ENCODE measurements at regions of chr15 and their contacts with region 1.

Region 1: DNA sequence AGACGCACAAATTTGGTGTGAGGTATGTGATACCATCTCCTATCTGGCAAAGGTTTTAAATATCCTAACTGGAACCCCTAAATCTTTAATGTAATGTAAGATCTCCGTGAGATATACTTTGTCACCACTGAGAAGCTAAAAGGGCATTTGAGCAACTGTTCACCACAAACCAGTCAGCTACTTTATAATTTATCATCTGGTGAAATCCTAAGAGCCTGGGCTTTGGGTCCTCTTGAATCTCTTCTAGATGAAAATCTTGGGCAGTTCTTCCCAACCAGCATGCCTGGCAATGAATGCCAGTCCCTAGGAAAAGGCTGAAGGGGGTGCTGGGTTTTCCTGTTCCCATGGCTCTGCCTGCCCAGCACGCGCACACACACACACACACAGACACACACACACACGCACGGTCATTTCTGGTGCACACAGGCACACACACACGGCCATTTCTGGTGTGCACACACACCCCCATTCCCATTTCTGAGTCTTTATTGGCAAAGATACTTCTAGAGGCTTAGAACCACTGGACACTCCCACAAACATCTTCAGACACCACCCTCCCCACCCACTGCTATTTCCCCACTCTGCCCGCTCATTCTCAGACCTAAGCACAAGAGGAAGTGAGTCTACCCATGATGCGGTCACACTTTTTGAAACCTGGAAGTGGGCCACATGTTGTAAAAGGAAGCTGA is 72.6 kb downstream of the MYO1E start:
- DNase-seq: peak; percentile 91
- H3K4me3 Mint-ChIP-seq: peak overlapping the region; percentile 80
- H3K27ac Mint-ChIP-seq: peak overlapping the region; percentile 86
- H3K4me1 Mint-ChIP-seq: peaks cover 55% of the 10 kb centered on the region
- H3K27me3 Mint-ChIP-seq: no peaks in the 10 kb centered on the region

Region 2: GRCh38 chr15:59247364-59247763 is 52.7 kb before region 1 on chr15:
- intact Hi-C with region 1: loop called (anchors 2 kb)
- DNase-seq: peak; percentile 85
- H3K4me3 Mint-ChIP-seq: no peak overlapping the region
- H3K27ac Mint-ChIP-seq: no peak overlapping the region
- H3K4me1 Mint-ChIP-seq: peaks cover 27% of the 10 kb centered on the region
- H3K27me3 Mint-ChIP-seq: no peaks in the 10 kb centered on the region

Region 3: DNA sequence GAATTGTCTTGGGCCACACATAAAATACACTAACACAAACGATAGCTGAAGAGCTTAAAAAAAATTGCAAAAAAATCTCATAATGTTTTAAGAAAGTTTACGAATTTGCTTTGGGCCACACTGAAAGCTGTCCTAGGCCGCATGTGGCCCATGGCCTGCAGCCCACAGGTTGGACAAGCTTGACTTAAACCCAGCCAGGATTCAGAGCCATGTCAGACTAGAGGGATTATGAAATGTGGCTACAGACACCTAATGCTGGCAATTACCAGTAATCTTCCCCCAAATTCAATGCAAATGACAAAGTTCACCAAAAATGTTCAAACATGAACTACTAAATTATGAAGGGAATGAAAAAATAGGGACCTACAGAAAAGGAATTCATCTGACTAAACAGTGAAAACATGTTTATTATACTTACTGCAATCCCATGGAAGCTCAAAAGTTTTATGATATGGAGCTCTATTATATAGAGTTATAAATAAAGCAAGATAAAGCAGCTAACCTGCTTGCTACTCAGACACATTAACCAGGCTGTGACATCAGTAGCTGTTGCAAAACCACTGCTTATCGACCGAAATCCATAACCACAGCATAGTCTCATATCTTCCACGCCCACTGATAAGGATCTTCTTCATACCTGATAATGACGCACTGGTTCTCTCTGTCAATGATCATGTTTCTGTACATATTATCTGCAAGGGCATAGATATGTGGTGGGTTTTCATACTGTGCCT is 44.3 kb before region 1 on chr15:
- intact Hi-C with region 1: loop called (anchors 1 kb)
- DNase-seq: peak; percentile 84
- H3K4me3 Mint-ChIP-seq: peak overlapping the region; percentile 31
- H3K27ac Mint-ChIP-seq: peak overlapping the region; percentile 76
- H3K4me1 Mint-ChIP-seq: peaks cover 50% of the 10 kb centered on the region
- H3K27me3 Mint-ChIP-seq: no peaks in the 10 kb centered on the region

Region 4: DNA sequence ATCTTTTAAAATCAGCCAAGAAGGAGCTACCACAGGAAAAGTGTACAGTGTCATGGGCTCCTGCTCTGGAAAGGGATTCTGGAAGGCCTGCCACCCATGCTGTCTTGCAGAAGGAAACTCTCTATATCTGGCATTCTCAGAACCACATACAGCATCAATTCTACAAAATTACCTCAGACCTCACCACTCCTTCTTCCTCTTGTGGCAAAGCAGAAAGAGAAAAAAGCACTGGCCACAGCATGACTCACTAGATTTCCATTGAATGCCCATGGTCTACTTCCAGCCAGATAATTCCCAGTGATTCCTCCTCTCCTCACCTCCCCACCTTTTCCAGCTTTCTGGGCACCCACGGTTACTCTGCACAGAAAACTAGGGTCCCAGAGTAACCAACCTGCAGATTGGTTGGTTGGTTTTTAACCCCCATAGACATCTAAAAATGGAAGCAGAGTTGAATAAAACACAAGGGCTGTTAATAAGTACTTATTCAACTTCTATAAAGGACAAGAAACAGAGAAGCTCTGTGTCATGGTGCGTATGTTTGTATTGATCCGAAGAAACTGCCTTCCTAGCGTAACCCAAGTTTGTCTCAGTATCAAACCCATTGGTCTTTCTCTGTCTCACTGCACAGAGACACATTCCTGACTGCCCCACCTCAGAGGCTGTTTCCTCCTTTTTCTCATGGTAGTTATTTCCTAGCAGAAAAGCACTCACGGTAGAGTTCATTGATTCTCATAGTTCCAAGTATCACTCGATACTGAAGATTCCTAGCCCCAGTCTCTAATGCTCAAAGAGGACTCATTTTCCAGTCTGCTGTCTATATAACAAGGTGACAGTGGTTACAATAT is 25.7 kb before region 1 on chr15:
- intact Hi-C with region 1: loop called (anchors 1 kb)
- DNase-seq: peak; percentile 75
- H3K4me3 Mint-ChIP-seq: peak overlapping the region; percentile 71
- H3K27ac Mint-ChIP-seq: peak overlapping the region; percentile 80
- H3K4me1 Mint-ChIP-seq: peaks cover 62% of the 10 kb centered on the region
- H3K27me3 Mint-ChIP-seq: peaks cover 8% of the 10 kb centered on the region

Region 5: GRCh38 chr15:59349680-59350420 is 49.8 kb after region 1 on chr15:
- intact Hi-C with region 1: loop called (anchors 2 kb)
- DNase-seq: peak; percentile 66
- H3K4me3 Mint-ChIP-seq: peak overlapping the region; percentile 57
- H3K27ac Mint-ChIP-seq: peak overlapping the region; percentile 75
- H3K4me1 Mint-ChIP-seq: peaks cover 51% of the 10 kb centered on the region
- H3K27me3 Mint-ChIP-seq: no peaks in the 10 kb centered on the region

Region 6: DNA sequence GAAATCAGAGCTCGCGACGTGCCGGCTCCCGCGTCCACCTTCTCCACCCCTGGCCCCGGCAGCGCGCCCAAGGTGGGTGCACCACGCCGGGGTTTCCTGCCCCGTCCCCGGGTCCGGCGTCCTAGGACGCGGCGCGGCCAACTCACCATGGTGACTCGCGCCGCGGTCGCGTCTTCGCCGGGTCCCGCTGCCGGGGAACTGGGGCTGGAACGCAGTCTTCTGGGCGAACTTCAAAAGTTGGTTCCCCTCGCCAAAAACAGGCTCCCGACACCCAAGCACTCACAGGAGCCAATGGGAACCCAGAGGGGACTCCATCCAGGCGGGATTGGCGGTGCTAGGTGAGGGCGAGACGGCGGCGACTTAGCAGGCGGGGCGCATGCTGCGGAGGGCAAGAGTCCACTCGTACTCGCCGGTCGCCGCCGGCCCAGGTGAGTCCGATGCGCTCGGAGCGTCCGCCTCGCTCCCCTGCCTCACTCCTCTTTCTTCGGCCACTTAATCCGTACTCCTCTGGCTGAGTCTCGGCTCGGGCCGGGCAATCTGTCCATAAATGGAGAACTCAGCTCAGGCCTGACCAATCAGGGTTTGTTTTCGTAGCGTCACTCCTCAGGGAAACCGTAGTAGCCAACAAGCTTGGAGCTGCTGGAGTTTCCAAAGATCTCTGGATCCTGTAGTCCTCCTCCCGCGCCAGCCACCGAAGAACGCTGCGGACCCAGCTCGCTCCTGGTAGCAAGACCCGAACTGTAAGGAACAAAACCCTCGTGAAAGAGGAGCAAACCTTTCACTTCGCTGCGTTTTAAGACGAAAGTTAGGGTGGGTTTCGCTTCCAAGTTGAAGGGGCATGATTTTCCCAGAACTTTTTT is 72.5 kb after region 1 on chr15 and contains the start of gene MYO1E:
- intact Hi-C with region 1: loop called (anchors 5 kb)
- DNase-seq: peak; percentile 84
- H3K4me3 Mint-ChIP-seq: peak within 1 kb of the TSS; percentile 98
- H3K27ac Mint-ChIP-seq: peak within 1 kb of the TSS; percentile 80
- H3K4me1 Mint-ChIP-seq: peaks cover 33% of the 10 kb centered on the region
- H3K27me3 Mint-ChIP-seq: peaks cover 37% of the 10 kb centered on the region
- total RNA-seq, gene MYO1E: 34.5 and 45.1 TPM in 2 replicates

Region 7: GRCh38 chr15:60162241-60162967 is 862.3 kb after region 1 on chr15:
- intact Hi-C with region 1: no loop called
- DNase-seq: no peak
- H3K4me3 Mint-ChIP-seq: no peak overlapping the region
- H3K27ac Mint-ChIP-seq: no peak overlapping the region
- H3K4me1 Mint-ChIP-seq: no peaks in the 10 kb centered on the region
- H3K27me3 Mint-ChIP-seq: peaks cover 35% of the 10 kb centered on the region